Motor neuron (in vitro differentiated cells): ENCODE measurements at regions of chr3 and their contacts with region 1.

Region 1: GRCh38 chr3:25594007-25594502 is 70.7 kb downstream of the TOP2B start:
- ATAC-seq: peak; percentile 47 to 70 (median 60)
- H3K4me3 ChIP-seq: no peak overlapping the region
- H3K27ac ChIP-seq: no peak overlapping the region
- H3K4me1 ChIP-seq: peaks cover 6 to 10% of the 10 kb centered on the region in 2 donors

Region 2: DNA sequence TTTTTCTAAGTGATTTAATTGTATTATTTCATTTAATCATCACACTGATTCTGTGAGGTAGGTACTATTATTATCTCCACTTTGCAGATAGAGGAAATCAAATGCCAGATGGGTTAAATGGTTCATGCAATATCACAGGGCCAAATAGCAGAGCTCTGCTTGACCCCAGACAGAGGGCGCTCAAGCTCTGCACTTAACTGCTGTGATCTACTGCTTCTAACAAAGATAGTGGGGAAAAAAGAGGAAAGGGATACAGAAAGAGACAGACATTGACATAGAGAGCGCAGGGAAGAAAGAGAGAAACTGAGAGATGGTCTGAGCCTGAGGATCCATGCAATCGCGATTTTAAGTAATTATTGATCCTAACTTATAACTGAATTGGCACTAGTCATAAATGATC is 820.3 kb before region 1 on chr3:
- in situ Hi-C with region 1: loop called in 4 of 9 experiments (anchors 10 to 25 kb)
- ATAC-seq: peak; percentile 85 to 98 (median 92)
- H3K4me3 ChIP-seq: no peak overlapping the region
- H3K27ac ChIP-seq: no peak overlapping the region
- H3K4me1 ChIP-seq: peaks cover 0 to 7% of the 10 kb centered on the region in 2 donors

Region 3: DNA sequence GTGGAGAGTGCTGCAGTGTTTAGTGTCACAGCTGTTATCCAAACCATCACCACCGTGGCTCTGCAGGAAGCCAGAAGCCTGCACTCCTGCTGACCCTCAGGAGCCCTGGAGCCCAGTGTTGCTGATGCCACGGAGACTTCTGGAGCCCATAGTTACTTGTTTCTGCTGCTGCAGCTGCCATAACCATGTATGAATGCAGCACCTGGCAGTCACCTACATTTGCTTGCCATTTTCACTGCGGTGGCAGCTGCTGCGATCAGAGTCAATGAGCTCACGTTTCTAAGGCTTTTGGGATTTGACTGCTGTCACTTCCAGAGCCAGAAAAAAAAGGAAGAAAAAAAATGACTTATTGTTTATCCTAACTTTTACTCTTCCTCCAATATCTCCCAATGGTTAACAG is 800.2 kb before region 1 on chr3:
- in situ Hi-C with region 1: loop called in 2 of 9 experiments (anchors 25 kb)
- ATAC-seq: no peak
- H3K4me3 ChIP-seq: no peak overlapping the region
- H3K27ac ChIP-seq: no peak overlapping the region
- H3K4me1 ChIP-seq: no peaks in the 10 kb centered on the region

Region 4: DNA sequence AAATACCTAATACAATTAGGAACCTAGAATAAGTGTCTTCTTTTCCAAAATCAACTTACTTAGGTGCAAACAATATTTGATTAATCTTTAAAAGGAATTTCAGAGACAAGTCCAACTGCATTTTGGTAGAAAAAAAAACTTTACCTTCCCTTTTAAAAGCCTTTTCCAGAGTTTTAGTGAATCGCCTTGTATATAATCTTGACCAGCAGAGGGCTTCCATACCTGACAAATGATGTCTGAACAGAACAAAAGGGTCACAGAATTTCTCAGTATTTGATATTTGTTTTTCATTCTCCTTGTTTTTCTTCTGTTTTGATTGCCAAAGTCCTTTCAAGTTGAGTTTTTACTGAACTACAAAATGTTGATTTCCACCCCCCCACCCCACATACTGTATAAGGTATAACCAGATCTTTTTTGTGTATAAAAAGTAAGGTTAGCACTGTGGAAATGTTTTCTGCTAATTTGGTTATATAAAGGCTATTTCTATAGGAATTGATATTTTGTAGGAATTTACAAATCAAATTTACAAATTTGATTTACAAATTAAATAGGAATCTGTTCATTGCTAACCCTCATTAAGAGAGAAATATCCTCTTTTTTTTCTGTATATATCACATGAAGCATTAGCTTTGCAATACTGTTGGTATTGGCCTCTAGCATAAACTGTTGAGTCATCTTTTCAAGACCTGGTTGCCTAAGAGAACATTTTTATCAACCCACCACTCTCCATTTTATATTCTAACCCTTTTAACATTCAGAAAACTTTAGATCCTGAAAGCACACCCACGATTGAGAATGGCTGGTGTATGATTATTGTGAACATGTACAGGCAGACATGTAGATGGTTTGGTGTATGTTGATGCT is 630.1 kb before region 1 on chr3:
- in situ Hi-C with region 1: loop called in 1 of 9 experiments (anchors 25 kb)
- ATAC-seq: peak in 4 of 8 experiments; percentile 22 to 48 (median 33)
- H3K4me3 ChIP-seq: no peak overlapping the region
- H3K27ac ChIP-seq: no peak overlapping the region
- H3K4me1 ChIP-seq: peaks cover 7 to 21% of the 10 kb centered on the region in 2 donors

Region 5: DNA sequence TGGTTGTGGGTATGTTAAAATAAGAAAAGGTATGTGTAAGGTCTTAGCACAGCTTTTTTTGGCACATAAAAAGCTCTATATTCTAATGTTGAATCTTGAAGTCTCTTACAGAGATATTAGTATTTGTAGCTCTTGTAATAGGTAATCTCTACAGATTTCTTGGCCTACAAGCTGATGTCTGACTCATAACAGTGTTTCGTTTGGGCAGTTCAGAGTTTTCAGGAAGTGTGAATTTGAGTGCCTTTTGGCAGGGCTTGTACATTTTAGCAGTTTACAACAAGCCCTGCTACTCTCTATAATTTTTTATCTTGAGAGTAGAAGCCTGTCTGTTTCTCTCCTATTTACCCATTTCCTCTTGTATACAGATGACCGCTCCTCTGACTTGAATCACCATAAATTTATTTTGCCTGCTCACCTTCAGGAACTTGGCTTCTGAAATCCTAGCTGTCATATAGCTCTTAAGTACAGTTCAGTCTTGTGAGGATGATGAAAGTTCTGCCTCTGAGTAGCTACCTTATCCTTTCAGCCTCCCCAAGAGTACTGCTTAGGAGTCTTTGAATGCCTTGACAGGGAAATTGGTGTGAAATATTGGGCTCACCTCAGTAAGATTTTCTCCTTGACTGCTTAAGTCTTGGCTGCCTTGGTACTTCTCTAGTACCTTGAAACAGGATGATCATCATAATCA is 585.9 kb before region 1 on chr3:
- in situ Hi-C with region 1: loop called in 1 of 9 experiments (anchors 25 kb)
- ATAC-seq: peak in 1 of 8 experiments; percentile 59
- H3K4me3 ChIP-seq: no peak overlapping the region
- H3K27ac ChIP-seq: no peak overlapping the region
- H3K4me1 ChIP-seq: no peaks in the 10 kb centered on the region

Region 6: DNA sequence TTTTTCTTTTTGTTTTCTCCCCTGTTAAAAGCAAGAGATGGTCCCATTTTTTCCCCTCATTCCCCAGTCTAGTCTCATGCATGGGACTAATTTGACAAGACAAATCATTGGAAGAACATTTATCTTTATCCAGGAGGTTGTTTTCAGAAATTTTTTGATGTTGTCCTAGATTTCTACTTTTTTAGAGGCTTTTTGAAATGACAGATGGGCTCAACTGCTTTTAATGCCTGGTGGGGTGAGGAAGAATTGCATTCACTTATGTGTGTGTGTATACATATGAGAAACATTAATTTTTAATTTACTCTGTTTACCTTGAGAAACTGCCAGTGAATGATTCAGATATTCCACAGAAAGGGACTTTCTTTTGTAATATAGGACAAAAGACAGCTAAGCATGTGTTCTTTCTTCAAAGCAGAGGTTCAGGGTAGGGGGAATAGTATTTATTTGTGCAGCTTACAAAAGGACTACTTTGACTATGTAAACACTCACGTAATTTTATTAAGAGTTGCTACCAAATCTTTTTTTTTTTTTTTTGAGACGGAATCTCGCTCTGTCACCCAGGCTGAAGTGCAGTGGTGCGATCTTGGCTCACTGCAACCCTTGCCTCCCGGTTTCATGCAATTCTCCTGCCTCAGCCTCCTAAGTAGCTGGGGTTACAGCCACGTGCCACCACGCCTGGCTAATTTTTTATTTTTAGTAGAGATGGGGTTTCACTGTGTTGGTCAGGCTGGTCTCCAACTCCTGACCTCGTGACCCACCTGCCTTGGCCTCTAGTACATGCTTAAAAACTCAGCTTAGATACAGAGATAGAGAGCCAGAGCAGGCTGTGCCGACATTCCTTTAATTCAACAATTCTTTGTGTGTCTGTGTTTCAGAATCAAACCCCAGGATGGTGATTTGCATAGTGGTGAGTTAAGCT is 296.1 kb before region 1 on chr3:
- in situ Hi-C with region 1: loop called in 1 of 9 experiments (anchors 25 kb)
- ATAC-seq: peak in 5 of 8 experiments; percentile 30 to 88 (median 61)
- H3K4me3 ChIP-seq: no peak overlapping the region
- H3K27ac ChIP-seq: no peak overlapping the region
- H3K4me1 ChIP-seq: peaks cover 8 to 24% of the 10 kb centered on the region in 2 donors